Dendritic cell treated with granulocyte-macrophage colony-stimulating factor and Interleukin-4, amounts not matched to agents 40 ng/mL and 50 ng/mL, for 4 days (primary cell): ENCODE measurements at regions of chr4 and their contacts with region 1.

Region 1: DNA sequence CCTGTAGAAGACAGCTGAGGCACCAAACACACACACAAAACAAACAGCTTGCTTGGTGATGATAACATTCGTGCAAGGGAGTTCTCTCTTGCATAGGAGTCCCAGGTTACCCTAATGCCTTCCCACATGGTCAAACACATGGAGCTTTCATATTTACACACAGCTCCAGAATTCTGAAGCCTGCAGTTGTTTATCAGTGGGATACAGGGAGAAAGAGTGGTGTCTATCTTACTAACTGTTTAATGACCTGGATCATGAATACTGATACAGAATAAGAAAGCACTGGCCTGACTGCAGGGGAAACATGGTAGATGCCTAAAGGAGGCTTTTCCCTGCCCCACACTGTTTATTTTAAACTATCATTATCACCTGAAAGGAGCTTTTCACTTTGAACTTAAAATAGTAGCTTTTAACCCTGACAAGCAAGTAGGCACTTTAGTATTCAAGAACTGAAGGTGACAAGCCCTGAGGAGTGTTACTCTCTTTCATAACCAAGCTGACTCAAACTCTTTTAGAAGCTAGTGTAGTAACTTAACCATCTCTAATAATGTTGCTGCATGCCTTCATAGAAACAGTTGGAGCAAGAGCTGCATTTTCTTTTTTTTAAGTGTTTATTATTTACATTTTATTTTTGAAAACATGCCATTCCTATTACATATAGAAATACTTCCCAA is 15.6 kb downstream of the TET2 start:
- H3K4me3 Mint-ChIP-seq: no peak overlapping the region
- H3K27ac Mint-ChIP-seq: no peak overlapping the region
- H3K4me1 Mint-ChIP-seq: peaks cover 35% of the 10 kb centered on the region
- H3K27me3 Mint-ChIP-seq: no peaks in the 10 kb centered on the region

Region 2: DNA sequence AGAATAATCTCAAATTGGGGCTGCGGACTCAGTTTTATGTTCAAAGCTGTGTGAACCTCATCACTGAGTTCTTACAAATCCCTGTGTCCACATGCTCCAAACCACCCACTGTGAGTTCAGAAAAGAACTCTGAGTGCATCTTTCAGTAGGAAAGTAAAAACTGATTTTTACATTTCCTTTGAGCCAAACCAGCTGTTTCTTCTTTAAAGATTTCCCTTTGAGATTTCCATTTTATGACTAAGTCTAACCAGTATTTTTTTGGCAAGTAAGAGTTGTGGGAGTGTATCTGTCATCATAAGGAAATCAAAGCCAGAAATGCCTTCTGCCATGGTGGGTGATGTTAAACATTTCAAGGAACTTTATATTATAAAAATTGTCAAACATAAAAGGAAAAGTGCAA is 84.5 kb after region 1 on chr4:
- intact Hi-C with region 1: loop called (anchors 5 kb)
- H3K4me3 Mint-ChIP-seq: no peak overlapping the region
- H3K27ac Mint-ChIP-seq: no peak overlapping the region
- H3K4me1 Mint-ChIP-seq: peaks cover 7% of the 10 kb centered on the region
- H3K27me3 Mint-ChIP-seq: no peaks in the 10 kb centered on the region